ENCODE measurements at regions of chr4 and their contacts with region 1.

Region 1: GRCh38 chr4:114386637-114387233 is 211.9 kb upstream of the UGT8 start:
- DNase-seq: no peak
- ATAC-seq: no peak
- H3K4me3 Mint-ChIP-seq: no peak overlapping the region
- H3K27ac Mint-ChIP-seq: no peak overlapping the region
- H3K4me1 Mint-ChIP-seq: no peaks in the 10 kb centered on the region
- H3K27me3 Mint-ChIP-seq: peaks cover 9% of the 10 kb centered on the region

Region 2: GRCh38 chr4:113278324-113278934 is 1108.3 kb before region 1 on chr4:
- CTCF ChIA-PET with region 1: interaction called, 4 read pairs
- POLR2A ChIA-PET with region 1: no interaction called
- intact Hi-C with region 1: loop called in 1 of 2 experiments (anchors 2 kb)
- DNase-seq: peak; percentile 84
- ATAC-seq: peak; percentile 99
- H3K4me3 Mint-ChIP-seq: no peak overlapping the region
- H3K27ac Mint-ChIP-seq: no peak overlapping the region
- H3K4me1 Mint-ChIP-seq: no peaks in the 10 kb centered on the region
- H3K27me3 Mint-ChIP-seq: peaks cover 11% of the 10 kb centered on the region

Region 3: DNA sequence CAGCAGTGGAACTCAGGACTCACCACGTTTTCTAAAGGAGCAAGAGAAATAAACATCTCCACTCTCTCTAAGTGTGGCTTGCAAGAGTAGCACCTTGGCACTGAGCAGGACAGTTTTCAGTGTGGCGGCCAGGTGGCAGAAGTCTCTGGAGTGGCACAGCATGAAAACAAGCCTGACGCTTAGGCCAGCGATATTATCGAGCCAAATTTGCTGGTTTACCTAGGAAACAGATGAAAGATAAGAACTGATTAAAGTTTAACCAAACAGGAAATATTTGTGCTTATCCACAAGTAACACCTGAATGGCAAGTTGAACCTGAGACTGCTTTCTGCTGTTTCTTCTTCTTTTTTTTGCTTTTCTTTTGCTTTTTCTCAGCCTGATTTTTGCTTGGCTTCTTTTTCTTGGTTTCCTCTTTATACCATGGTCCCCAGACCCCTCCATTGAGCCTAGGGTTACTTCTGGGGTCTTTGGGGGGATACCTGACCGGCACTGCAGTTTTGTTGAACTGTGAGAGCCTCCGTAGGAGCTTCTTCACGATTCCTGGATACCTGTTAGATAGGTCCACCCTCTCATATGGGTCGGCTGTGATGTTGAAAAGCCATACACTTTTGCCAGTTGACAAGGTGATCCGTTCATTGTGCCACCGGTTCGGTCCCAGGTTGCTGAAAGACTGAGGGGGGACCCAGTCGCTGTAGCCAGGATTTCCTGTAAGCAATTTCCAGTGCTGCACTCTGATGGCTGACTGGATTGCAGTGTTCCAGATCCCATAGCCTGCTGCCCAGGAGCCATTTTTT is 484.5 kb before region 1 on chr4:
- CTCF ChIA-PET with region 1: no interaction called
- POLR2A ChIA-PET with region 1: no interaction called
- intact Hi-C with region 1: loop called in 1 of 2 experiments (anchors 2 kb)
- DNase-seq: peak; percentile 78
- ATAC-seq: peak; percentile 96
- H3K4me3 Mint-ChIP-seq: peak overlapping the region; percentile 20
- H3K27ac Mint-ChIP-seq: peak overlapping the region; percentile 81
- H3K4me1 Mint-ChIP-seq: peaks cover 64% of the 10 kb centered on the region
- H3K27me3 Mint-ChIP-seq: no peaks in the 10 kb centered on the region

Region 4: GRCh38 chr4:113969709-113970334 is 416.9 kb before region 1 on chr4:
- CTCF ChIA-PET with region 1: no interaction called
- POLR2A ChIA-PET with region 1: no interaction called
- intact Hi-C with region 1: no loop called
- DNase-seq: no peak
- ATAC-seq: no peak
- H3K4me3 Mint-ChIP-seq: no peak overlapping the region
- H3K27ac Mint-ChIP-seq: no peak overlapping the region
- H3K4me1 Mint-ChIP-seq: no peaks in the 10 kb centered on the region
- H3K27me3 Mint-ChIP-seq: peaks cover 6% of the 10 kb centered on the region

Region 5: DNA sequence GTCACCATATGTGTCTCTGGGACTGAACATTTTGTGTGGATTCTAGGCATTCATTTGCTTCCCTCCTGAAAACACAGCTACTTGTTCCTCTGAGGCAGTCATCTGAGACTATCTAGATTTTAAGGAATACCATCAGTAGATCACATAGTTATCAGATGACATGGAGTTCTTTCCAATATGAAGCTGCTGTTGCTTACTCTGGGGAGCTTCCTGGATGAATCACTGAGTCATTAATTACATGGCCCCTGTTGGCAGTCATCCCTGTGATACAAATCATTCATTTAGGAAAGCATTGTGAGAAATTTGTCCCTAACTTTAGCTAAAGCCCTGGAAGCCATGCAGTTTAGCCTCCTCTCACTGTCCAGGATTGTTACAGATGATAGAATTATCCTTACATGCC is 309.1 kb before region 1 on chr4:
- CTCF ChIA-PET with region 1: no interaction called
- POLR2A ChIA-PET with region 1: no interaction called
- intact Hi-C with region 1: loop called in 1 of 2 experiments (anchors 10 kb)
- DNase-seq: no peak
- ATAC-seq: no peak
- H3K4me3 Mint-ChIP-seq: no peak overlapping the region
- H3K27ac Mint-ChIP-seq: no peak overlapping the region
- H3K4me1 Mint-ChIP-seq: no peaks in the 10 kb centered on the region
- H3K27me3 Mint-ChIP-seq: peaks cover 6% of the 10 kb centered on the region

Region 6: GRCh38 chr4:114694770-114695169 is 308.0 kb after region 1 on chr4:
- CTCF ChIA-PET with region 1: interaction called, 12 read pairs
- POLR2A ChIA-PET with region 1: no interaction called
- intact Hi-C with region 1: loop called (anchors 1 kb)
- DNase-seq: no peak
- ATAC-seq: no peak
- H3K4me3 Mint-ChIP-seq: no peak overlapping the region
- H3K27ac Mint-ChIP-seq: no peak overlapping the region
- H3K4me1 Mint-ChIP-seq: no peaks in the 10 kb centered on the region
- H3K27me3 Mint-ChIP-seq: peaks cover 4% of the 10 kb centered on the region

Region 7: GRCh38 chr4:115343171-115343570 is 956.4 kb after region 1 on chr4:
- CTCF ChIA-PET with region 1: no interaction called
- POLR2A ChIA-PET with region 1: no interaction called
- intact Hi-C with region 1: no loop called
- DNase-seq: no peak
- ATAC-seq: no peak
- H3K4me3 Mint-ChIP-seq: no peak overlapping the region
- H3K27ac Mint-ChIP-seq: no peak overlapping the region
- H3K4me1 Mint-ChIP-seq: no peaks in the 10 kb centered on the region
- H3K27me3 Mint-ChIP-seq: no peaks in the 10 kb centered on the region